ENCODE measurements at regions of chr17 and their contacts with region 1.

Region 1: GRCh38 chr17:19362277-19363113 is at the start of gene B9D1:
- DNase-seq: no peak
- H3K4me3 ChIP-seq: peak within 1 kb of the TSS; percentile 56
- H3K27me3 ChIP-seq: no peaks in the 10 kb centered on the region
- CTCF ChIP-seq: peak; percentile 93
- polyA plus RNA-seq, gene B9D1: 43.3 and 55.8 TPM in 2 replicates

Region 2: GRCh38 chr17:19309701-19310100 is 52.8 kb before region 1 on chr17:
- CTCF ChIA-PET with region 1: no interaction called
- POLR2A ChIA-PET with region 1: no interaction called
- DNase-seq: no peak
- H3K4me3 ChIP-seq: no peak overlapping the region
- H3K27me3 ChIP-seq: no peaks in the 10 kb centered on the region
- CTCF ChIP-seq: no peak

Region 3: DNA sequence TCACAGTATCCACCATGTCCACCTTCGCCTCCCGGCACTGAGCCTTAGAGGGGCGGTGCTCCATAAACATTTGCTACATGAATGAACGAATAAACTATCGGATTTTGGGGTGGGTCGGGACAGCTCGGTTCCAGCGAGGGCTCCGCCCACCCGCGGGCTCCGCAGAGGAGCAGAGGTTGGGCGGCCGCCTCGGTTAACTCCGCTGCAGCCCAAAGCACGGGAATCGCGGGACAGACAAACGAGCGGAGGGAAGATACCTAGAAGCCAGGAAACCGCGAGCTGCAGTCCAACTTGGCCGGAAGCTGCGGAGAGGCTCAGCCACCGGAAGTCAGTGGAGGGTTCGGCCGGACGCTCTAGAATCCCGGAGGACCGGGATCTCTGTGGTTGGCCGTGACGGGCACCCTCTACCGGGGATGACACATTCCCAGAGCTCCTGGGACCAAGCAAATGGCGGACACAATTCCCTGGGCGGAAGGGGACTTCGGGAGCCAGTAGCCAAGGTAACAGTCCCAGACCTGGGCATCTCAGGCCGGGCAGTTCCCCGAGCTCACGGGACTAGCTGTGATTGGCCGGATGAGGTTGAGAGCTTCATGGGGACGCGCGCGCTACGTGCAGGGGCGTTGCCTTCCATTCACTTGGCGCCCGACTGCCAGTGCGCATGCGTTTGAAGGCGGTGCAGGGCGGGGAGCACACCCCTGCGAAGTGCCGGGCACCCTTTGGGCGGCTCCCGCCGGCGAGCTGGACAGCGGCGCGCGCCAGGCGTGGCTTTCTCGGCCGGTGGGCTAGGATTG is 15.3 kb after region 1 on chr17:
- CTCF ChIA-PET with region 1: interaction called, 18 read pairs
- POLR2A ChIA-PET with region 1: interaction called, 3 read pairs
- DNase-seq: peak; percentile 96
- H3K4me3 ChIP-seq: peak overlapping the region; percentile 85
- H3K27me3 ChIP-seq: no peaks in the 10 kb centered on the region
- CTCF ChIP-seq: no peak

Region 4: DNA sequence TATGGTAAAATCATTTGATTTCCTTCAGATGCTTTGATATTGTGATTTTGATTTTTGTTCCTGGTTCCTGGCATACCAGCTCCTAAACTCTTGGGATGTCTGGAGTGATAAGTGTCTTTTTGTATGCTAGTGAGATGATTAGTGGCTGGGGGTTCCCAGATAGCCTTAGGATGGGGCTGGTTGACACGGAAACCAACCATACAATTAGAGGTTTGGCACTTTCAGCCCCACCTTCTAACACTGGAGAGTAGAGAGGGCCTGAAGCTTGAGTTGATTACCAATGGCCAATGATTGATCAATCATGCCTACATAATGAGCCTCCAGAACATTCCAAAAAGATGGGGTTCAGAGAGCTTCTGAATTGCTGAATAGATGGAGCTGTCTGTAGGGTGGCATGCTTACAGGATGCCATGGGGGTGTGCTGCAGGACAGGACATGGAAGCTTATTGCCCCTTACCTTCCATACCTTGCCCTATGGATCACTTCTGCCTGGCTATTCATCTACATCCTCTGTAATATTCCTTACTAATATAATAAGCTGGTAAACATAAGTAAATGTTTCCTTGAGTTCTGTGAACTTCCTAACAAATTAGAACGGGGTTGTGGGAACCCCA is 71.3 kb after region 1 on chr17:
- CTCF ChIA-PET with region 1: interaction called, 13 read pairs
- POLR2A ChIA-PET with region 1: no interaction called
- DNase-seq: no peak
- H3K4me3 ChIP-seq: no peak overlapping the region
- H3K27me3 ChIP-seq: no peaks in the 10 kb centered on the region
- CTCF ChIP-seq: no peak

Region 5: DNA sequence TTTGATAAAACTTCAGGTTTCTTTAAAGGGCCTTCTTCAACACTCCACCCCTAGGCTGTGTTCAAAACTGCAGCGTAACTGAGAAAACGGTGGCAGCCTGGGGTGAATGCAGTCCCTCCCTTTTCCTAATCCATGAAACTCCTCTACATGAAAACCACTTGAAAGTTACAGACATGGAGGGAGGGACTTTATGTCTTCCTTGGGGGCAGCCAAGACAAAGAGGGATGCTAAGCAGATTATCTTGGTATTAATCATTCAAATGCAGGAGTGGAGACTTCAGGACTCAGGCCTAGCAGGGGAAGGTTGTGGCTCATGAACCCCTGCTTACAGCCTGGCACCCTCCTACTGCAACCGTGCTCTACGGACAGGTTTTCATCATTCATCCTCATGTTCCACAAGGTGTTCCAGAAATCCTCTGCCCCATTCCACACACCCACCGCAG is 95.4 kb after region 1 on chr17:
- CTCF ChIA-PET with region 1: interaction called, 15 read pairs
- POLR2A ChIA-PET with region 1: no interaction called
- DNase-seq: no peak
- H3K4me3 ChIP-seq: no peak overlapping the region
- H3K27me3 ChIP-seq: peaks cover 15% of the 10 kb centered on the region
- CTCF ChIP-seq: no peak

Region 6: GRCh38 chr17:19494961-19495806 is 132.7 kb after region 1 on chr17:
- CTCF ChIA-PET with region 1: no interaction called
- POLR2A ChIA-PET with region 1: no interaction called
- DNase-seq: no peak
- H3K4me3 ChIP-seq: no peak overlapping the region
- H3K27me3 ChIP-seq: peaks cover 2% of the 10 kb centered on the region; the same call in 1 of the 2 replicates
- CTCF ChIP-seq: no peak

Region 7: GRCh38 chr17:19766422-19767270 is 404.2 kb after region 1 on chr17:
- CTCF ChIA-PET with region 1: interaction called, 36 read pairs
- POLR2A ChIA-PET with region 1: no interaction called
- DNase-seq: no peak
- H3K4me3 ChIP-seq: no peak overlapping the region
- H3K27me3 ChIP-seq: no peaks in the 10 kb centered on the region; the same call in 1 of the 2 replicates
- CTCF ChIP-seq: peak; percentile 100

Region 8: GRCh38 chr17:20103454-20104446 is 741.3 kb after region 1 on chr17:
- CTCF ChIA-PET with region 1: no interaction called
- POLR2A ChIA-PET with region 1: no interaction called
- DNase-seq: no peak
- H3K4me3 ChIP-seq: no peak overlapping the region
- H3K27me3 ChIP-seq: peaks cover 11% of the 10 kb centered on the region
- CTCF ChIP-seq: no peak

Region 9: DNA sequence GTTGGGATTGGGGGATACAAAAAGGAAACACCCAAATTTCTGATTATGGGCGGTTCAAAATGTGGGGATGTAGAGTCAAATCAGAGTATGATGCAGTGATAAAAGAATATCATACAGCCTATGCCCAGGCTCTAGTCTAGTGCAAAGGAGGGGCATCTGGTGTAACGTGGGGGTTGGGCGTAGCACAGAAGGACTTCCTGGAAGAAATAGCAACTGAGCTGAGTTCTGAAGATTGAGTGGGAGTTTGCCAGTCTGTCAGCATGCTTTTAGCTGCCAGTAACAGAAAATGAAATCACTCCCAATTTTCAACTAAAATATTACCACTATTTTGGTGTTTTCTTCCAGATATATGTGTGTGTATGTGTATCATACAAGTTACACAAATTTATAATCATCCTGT is 843.6 kb after region 1 on chr17:
- CTCF ChIA-PET with region 1: no interaction called
- POLR2A ChIA-PET with region 1: no interaction called
- DNase-seq: no peak
- H3K4me3 ChIP-seq: no peak overlapping the region
- H3K27me3 ChIP-seq: no peaks in the 10 kb centered on the region
- CTCF ChIP-seq: no peak